Dorsolateral prefrontal cortex (tissue), 120 donors: ENCODE measurements at regions of chr14 and their contacts with region 1.

Region 1: DNA sequence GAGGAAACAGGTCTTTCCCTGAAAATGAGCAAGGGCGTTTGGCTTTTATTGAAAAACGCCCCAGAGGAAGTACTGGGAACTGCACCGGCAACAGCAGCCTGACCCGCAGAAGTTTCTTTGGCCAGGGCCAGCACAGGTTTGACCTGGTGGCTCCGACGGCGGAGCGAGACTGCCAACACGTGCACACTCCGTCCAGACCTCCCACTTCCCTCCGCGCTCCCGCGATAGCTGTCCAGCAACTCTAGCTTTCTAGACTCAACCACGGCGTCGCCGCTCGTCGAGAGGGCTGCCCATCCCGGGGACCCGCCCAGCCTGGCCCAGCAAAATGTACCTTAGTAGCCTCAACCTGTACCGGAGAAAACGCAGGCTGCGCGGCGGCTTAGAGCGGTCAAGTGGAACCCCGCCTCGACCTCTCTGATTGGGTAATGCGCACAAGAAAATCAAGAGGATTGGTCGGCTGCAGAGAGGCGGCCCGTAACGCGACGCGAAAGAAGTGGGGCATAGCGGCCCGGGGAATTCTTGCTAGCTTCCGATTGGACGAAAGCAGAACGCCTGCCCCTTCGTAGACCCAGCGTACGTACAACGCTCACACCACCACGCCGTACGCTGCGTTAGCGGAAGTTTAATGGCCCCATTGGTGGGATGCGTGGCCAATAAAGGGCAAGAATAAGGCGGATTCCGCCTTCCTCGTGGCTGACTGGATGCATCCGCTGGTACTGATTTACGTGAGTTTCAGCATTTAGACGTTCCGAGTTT is at the start of gene WDR89:
- DNase-seq: peak; percentile 93 to 99 (median 99)
- H3K4me3 ChIP-seq: peak within 1 kb of the TSS; percentile 57 to 98 (median 87)
- H3K27ac ChIP-seq: peak within 1 kb of the TSS; percentile 76 to 100 (median 96)
- H3K27me3 ChIP-seq: no peaks in the 10 kb centered on the region
- CTCF ChIP-seq: peak in 54 of 56 donors; percentile 19 to 70 (median 50)
- total RNA-seq, gene WDR89: 9.3 to 21.4 (median 15.0) TPM

Region 2: GRCh38 chr14:63388763-63389431 is 252.8 kb before region 1 on chr14:
- intact Hi-C with region 1: loop called in 1 of 2 experiments (anchors 5 kb)
- DNase-seq: peak in 8 of 10 donors; percentile 31 to 73 (median 53)
- H3K4me3 ChIP-seq: no peak overlapping the region
- H3K27ac ChIP-seq: no peak overlapping the region
- H3K27me3 ChIP-seq: no peaks in the 10 kb centered on the region
- CTCF ChIP-seq: peak in 55 of 56 donors; percentile 51 to 94 (median 77)

Region 3: DNA sequence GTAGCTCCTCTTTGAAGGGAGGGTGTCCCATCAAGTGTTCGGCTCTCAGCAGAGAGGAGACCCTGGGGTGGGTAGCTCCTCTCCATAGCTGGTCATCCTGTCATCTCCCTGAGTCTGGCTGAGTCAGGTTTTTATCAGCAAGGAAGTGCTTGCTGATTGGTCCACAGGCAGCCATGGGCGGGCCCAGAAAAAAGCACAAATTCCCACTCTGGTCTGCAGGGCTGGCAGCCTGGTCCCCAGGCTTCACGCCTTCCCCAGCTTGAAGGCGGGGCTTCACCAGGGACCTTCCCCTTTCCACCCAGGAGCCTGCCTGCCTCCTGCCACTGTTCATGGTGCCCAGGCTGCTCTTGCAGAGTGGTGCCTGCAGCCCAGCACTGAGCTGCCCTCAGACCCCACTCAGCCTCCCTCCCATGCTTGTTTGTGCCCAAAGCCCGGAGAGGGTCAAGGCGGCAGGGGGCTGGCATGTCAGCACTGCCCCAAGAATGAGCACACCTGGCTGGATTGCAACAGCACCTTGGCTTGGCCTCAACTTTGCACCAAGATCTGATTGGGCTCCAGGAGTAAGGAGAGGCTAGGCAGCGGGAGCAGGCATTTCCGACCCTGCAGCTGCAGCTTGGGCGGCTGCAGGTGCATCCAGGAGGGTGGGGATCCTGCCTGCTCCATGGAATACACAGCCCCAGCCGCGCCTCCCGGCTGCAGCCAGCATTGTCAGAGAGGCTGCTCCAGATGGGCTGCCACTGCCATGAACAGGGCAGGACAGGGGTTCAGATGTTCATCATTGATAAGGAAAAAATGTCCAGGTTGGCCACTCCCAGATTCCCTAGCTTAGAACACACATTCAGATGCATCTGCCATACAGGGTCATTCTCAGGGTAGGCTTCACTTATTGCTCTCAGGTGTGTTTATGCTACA is 22.0 kb after region 1 on chr14:
- intact Hi-C with region 1: loop called in 1 of 2 experiments (anchors 2 kb)
- DNase-seq: no peak
- H3K4me3 ChIP-seq: no peak overlapping the region
- H3K27ac ChIP-seq: no peak overlapping the region
- H3K27me3 ChIP-seq: no peaks in the 10 kb centered on the region
- CTCF ChIP-seq: no peak

Region 4: GRCh38 chr14:63727774-63728728 is 86.4 kb after region 1 on chr14 and contains the start of gene SGPP1:
- intact Hi-C with region 1: loop called (anchors 1 to 5 kb)
- DNase-seq: peak; percentile 41 to 79 (median 61)
- H3K4me3 ChIP-seq: peak within 1 kb of the TSS; percentile 70 to 98 (median 91)
- H3K27ac ChIP-seq: peak within 1 kb of the TSS; percentile 63 to 97 (median 90)
- H3K27me3 ChIP-seq: no peaks in the 10 kb centered on the region
- CTCF ChIP-seq: peak in 47 of 56 donors; percentile 13 to 62 (median 41)
- total RNA-seq, gene SGPP1: 16.0 to 26.2 (median 20.9) TPM